ENCODE measurements at regions of chr1 and their contacts with region 1.

Region 1: DNA sequence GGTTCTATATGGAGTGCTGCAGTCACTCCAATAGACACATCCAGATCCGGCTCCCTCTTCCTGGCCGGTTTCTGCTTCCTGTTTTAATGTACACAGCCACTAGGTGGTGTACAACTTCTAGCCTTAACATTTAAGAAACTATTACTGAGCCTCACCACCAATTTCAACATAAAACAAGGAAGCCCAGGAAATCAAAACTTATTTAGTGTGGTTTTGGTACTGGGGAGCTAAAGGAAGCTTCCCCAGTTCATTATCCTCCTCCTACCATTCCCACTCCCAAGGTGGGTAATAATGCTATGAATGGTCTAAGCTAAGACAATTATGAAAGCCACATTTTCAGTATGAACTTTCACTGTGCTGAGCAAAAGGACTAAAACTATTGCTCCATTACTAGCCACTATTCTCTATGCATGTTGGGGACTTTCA is 25.5 kb upstream of the MTMR11 start:
- DNase-seq: peak in 6 of 10 donors; percentile 34 to 90 (median 39)

Region 2: GRCh38 chr1:150010393-150011115 is 48.4 kb after region 1 on chr1 and contains the start of gene OTUD7B:
- intact Hi-C with region 1: loop called (anchors 5 kb)
- DNase-seq: peak; percentile 82 to 98 (median 88)

Region 3: GRCh38 chr1:150049926-150050325 is 87.8 kb after region 1 on chr1:
- intact Hi-C with region 1: loop called (anchors 1 kb)
- DNase-seq: no peak

Region 4: GRCh38 chr1:150162862-150163706 is 200.9 kb after region 1 on chr1:
- intact Hi-C with region 1: loop called (anchors 10 kb)
- DNase-seq: peak; percentile 43 to 96 (median 79)

Measured in posterior cingulate gyrus (tissue), 11 donors.